Posterior vena cava (tissue), 2 donors: ENCODE measurements at regions of chr7 and their contacts with region 1.

Region 1: DNA sequence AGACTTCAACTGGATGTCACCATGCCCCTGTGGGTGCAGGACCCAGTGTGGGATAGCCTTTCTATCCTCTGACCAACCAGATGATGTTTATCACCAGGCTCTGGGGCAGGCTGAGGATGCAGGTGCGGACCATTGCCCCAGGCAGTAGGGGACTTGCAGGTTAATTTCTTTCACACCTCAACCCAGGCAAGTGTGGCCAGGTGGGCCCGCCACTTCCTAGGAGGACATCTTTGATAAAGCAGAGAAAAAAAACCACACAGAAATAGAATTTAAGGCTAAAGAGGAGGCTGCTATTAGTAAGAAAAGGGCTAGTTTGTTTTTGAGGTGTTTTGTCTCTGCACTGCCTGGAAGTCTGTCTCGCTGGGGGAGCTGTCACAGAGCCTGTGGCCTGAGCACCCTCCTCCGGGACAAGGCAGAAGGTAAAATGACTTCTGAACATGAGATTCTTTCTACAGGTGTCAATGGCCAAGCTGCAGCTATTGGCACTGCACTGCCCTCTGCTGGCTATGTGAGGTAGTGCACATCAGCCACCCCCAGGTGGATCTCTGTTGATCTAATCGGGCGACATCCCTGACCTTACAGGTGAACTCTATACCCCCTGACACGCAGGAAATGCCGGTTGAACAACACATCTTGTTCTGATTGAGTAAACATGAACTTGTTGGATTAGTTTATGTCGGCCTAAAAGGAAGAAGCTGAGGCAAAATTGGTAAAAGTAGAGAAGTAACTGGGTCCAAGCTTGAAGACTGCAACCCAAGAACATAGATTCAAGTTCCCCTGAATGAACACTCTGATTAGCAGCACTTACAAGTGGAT is 21.0 kb downstream of the UPP1 start:
- DNase-seq: peak; percentile 90

Region 2: DNA sequence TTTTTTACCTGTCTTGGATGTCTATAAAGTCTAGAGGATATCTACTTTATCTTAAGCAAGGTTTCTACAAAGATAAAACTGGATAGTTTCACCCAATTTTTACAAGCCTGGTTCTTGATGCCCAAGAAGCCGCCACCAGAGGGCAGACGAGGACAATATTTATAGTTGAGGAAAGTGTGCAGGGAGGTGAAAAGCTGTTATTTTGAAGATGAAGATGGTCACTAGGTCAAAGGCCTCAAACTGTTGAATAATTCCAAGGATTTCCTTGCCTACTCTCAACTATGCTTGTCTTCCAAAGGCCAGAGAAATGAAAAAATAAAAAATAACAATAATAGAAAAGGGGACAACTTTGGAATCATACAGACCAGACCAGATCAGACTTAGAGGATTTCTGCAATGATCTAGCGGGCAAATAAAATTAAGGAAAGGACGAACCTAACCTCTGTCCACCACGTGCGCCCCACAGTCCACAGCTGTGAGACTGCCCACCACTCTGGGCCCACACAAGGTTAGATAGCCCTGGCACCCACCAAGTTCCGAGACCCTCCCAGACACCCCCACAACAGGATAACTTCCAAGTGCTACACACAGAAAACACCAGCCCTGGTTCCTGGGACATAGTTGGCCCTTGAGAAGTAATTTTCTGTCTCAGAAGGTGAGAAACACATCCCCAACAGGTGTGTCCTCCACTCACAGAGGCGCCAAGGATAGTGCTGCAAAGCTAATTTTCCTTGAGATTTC is 164.6 kb before region 1 on chr7:
- intact Hi-C with region 1: loop called (anchors 5 to 10 kb)
- DNase-seq: peak; percentile 92

Region 3: GRCh38 chr7:47991741-47992311 is 118.2 kb before region 1 on chr7:
- intact Hi-C with region 1: loop called in 1 of 2 experiments (anchors 5 kb)
- DNase-seq: peak; percentile 97